ENCODE measurements at regions of chr14 and their contacts with region 1.

Region 1: DNA sequence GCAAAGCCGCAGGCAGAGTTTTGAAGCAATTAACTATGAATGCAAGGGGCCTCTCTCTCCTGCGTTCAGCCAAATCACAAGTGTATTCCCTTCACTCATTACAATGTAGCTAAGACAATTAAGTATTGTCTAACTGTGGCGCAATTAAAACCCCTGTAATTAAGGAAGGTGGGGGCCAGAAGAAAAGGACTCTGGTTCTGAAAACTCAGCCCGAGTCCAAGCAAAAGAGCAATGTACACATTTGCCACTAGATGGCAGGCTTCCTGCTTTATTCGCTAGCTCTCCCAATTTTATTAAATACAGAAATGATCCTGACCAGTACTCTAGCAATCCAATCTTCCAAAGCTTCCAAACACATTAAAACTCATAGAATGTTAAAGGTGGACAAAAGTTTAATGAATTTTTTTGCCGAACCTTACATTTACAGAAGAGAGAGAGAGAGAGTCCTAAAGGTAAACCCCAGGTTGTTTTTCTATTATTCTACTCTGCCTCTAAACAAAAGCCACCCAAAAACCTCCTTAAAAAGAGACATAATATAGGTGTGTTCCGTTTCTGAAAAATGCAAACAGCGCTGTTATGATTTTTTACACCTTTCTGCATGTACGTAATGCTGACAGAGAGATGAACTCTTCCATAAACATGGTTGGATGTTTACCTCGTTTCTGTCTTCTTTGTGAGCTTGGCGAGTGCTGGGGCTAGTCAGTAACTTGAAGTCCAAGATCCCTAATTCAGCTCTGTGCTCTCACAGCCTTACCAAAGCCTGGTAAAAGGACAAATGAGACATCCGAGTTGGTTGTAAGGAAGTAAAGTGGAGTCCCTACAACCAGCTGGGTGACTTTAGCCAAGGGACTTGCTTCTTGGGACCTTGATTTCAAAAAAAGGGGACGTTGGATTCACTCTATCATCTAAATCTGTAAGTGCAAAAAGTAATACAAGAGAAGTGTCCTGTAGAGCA is 50.9 kb upstream of the VASH1 start:
- DNase-seq: no peak
- ATAC-seq: no peak
- H3K4me3 Mint-ChIP-seq: no peak overlapping the region
- H3K27ac Mint-ChIP-seq: no peak overlapping the region
- H3K4me1 Mint-ChIP-seq: no peaks in the 10 kb centered on the region
- H3K27me3 Mint-ChIP-seq: peaks cover 11% of the 10 kb centered on the region
- CTCF ChIP-seq: no peak

Region 2: DNA sequence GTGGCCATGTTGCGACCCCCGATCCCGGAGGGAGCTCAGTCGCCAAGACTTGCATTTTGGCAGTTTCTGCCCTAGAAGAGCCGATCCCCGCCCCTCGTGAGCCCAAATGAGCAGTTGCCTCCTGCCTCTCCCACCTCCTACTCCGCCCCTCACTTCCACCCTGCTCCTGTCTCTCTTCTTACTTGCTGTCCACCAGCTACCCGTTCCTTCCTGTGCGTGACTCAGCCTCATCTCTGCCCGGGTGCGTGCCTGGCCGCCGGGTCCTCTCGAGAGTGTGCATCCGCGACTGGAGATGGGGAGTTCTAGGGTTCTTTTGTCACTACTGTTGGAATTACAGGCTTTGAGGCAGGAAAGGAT is 558.0 kb before region 1 on chr14:
- CTCF ChIA-PET with region 1: no interaction called
- POLR2A ChIA-PET with region 1: no interaction called
- intact Hi-C with region 1: no loop called
- DNase-seq: peak; percentile 34
- ATAC-seq: peak; percentile 55
- H3K4me3 Mint-ChIP-seq: peak overlapping the region; percentile 97
- H3K27ac Mint-ChIP-seq: peak overlapping the region; percentile 94
- H3K4me1 Mint-ChIP-seq: peaks cover 60% of the 10 kb centered on the region
- H3K27me3 Mint-ChIP-seq: no peaks in the 10 kb centered on the region
- CTCF ChIP-seq: no peak

Region 3: GRCh38 chr14:76784266-76785264 is 74.2 kb after region 1 on chr14:
- CTCF ChIA-PET with region 1: interaction called, 45 read pairs
- POLR2A ChIA-PET with region 1: no interaction called
- intact Hi-C with region 1: loop called (anchors 1 kb)
- DNase-seq: no peak
- ATAC-seq: peak; percentile 98
- H3K4me3 Mint-ChIP-seq: no peak overlapping the region
- H3K27ac Mint-ChIP-seq: peak overlapping the region; percentile 31
- H3K4me1 Mint-ChIP-seq: no peaks in the 10 kb centered on the region
- H3K27me3 Mint-ChIP-seq: no peaks in the 10 kb centered on the region
- CTCF ChIP-seq: no peak

Region 4: DNA sequence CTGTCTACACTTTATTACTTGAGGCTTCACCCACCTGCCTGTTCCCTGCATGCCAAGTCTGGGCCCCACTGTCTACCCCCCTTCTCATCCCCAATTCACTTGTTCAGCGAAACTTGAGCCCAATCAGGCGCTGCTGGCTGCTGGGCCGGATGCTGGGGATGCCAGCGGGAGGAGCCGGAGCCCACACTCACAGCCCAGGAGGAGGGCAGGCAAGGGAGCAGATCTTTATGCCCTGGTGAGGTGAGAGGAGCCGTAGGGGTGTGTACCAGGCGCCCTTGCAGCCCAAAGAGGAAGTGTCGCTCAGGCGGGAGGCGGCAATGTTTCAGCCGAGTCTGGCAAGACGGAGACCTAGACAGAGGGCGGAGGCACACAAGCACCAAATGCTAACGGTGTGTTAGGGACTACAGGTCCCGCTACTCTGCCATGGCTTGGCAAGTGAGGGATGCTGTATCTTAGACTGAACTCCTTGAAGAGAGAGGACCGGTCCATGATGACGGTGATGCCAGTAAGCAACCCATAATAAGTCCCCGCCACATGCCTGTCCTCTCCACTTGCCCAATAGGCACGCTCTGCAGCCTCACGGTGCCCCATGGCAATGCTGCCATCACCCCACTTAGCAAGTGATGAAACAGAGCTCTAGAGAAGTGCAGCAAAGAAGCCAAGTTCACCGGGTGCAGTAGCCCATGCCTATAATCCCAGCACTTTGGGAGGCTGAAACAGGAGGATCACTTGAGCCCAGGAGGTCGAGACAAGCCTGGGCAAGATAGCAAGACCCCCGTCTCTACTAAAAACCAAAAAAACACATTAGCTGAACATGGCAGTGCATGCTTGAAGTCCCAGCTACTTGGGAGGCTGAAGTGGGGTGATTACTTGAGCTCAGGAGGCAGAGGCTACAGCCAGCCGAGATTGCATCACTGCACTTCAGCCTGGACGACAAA is 157.5 kb after region 1 on chr14:
- CTCF ChIA-PET with region 1: no interaction called
- POLR2A ChIA-PET with region 1: no interaction called
- intact Hi-C with region 1: loop called (anchors 2 kb)
- DNase-seq: peak; percentile 34
- ATAC-seq: peak; percentile 93
- H3K4me3 Mint-ChIP-seq: no peak overlapping the region
- H3K27ac Mint-ChIP-seq: no peak overlapping the region
- H3K4me1 Mint-ChIP-seq: peaks cover 18% of the 10 kb centered on the region
- H3K27me3 Mint-ChIP-seq: peaks cover 13% of the 10 kb centered on the region
- CTCF ChIP-seq: no peak

Measured in activated B cell treated with CpG ODN at 0.5 μM for 24 hours (primary cell).